Esophagus muscularis mucosa (tissue), 4 donors: ENCODE measurements at regions of chr22 and their contacts with region 1.

Region 1: GRCh38 chr22:36277482-36278291 is 24.8 kb downstream of the APOL1 start:
- DNase-seq: no peak
- H3K4me3 ChIP-seq: no peak overlapping the region
- H3K27ac ChIP-seq: peak overlapping the region in 3 of 4 donors; percentile 53 to 70 (median 65)
- H3K4me1 ChIP-seq: peaks cover 11 to 42% (median 26%) of the 10 kb centered on the region in 4 donors
- H3K27me3 ChIP-seq: no peaks in the 10 kb centered on the region
- CTCF ChIP-seq: peak; percentile 77 to 89 (median 79)
- EP300 ChIP-seq: no peak
- POLR2A ChIP-seq: no peak

Region 2: DNA sequence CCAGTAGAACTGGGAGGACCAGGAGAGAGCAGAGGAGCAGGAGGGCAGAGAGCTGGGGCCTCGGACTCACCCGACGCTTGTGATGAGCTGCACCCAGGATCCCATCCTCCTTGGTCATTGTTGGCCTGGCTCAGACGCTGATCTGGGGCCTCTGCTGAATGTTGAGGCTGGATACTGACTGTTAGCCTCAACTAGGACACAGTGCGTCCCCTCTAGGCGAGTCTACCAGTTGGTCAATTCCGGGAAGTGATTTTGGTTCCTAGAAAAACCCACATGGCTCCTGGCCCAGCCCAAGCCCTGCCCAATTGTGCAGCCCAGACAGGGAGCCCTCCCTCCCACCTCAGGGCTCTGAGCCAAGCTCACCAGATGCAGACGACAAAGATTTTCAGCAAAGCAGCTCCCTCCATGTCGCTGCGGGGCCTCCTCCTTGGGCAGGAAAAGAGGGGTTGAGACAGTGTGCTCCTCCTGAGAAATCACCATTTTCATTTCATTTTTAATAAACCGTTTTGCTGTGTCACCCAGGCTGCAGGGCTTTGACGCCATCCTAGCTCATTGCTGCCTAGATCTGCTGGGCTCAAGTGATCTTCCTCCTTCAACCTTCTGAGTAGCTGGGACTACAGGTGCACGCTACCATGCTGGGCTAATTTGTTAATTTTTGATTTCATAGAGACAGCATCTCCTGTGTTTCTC is 75.9 kb before region 1 on chr22 and contains the start of gene APOL4:
- intact Hi-C with region 1: no loop called
- DNase-seq: no peak
- H3K4me3 ChIP-seq: peak within 1 kb of the TSS in 2 of 4 donors; percentile 22 to 35
- H3K27ac ChIP-seq: peak within 1 kb of the TSS in 3 of 4 donors; percentile 13 to 57 (median 51)
- H3K4me1 ChIP-seq: peaks cover 19 to 30% (median 22%) of the 10 kb centered on the region in 4 donors
- H3K27me3 ChIP-seq: no peaks in the 10 kb centered on the region
- CTCF ChIP-seq: no peak
- EP300 ChIP-seq: no peak
- POLR2A ChIP-seq: no peak
- total RNA-seq, gene APOL4: 0.19 to 24.7 (median 1.6) TPM

Region 3: GRCh38 chr22:36239401-36240171 is 38.1 kb before region 1 on chr22 and contains the start of gene APOL2:
- intact Hi-C with region 1: loop called (anchors 5 kb)
- DNase-seq: peak; percentile 96
- H3K4me3 ChIP-seq: peak within 1 kb of the TSS; percentile 60 to 70 (median 60)
- H3K27ac ChIP-seq: peak within 1 kb of the TSS; percentile 85 to 90 (median 88)
- H3K4me1 ChIP-seq: peaks cover 47 to 63% (median 62%) of the 10 kb centered on the region in 4 donors
- H3K27me3 ChIP-seq: no peaks in the 10 kb centered on the region
- CTCF ChIP-seq: peak; percentile 77 to 78 (median 77)
- EP300 ChIP-seq: no peak
- POLR2A ChIP-seq: peak; percentile 59
- total RNA-seq, gene APOL2: 22.0 to 41.9 (median 34.4) TPM